ENCODE measurements at regions of chr6 and their contacts with region 1.

Region 1: DNA sequence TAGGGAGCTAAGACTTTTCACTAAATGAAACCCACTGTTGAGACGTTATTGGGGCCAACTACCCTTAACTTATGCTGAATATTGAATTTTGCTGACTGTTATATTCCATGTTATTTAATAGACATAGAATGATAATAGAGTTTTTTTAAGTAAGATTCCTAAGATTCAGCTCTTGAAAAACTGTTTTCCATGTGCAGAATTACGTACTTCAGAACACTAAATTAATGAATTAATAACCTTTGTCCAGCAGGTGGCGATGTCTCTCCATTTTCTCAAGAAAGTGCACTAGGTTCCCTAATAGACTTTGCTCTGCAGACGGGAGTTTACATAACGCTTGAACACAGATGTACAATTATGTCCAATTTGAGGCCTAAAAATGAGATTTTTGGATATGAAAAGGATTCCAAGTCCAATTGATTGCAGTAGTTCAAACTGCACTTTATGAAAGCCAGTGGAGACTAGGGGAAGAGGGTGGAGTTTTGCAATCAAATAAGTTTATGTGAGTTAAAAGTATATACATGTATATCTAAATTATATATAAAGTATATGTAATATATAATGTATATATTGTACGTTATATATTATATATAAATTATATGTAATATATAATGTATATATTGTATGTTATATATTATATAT is 282.1 kb downstream of the UST start:
- DNase-seq: peak; percentile 87
- H3K4me3 Mint-ChIP-seq: no peak overlapping the region
- H3K27ac Mint-ChIP-seq: peak overlapping the region; percentile 57
- H3K4me1 Mint-ChIP-seq: peaks cover 46% of the 10 kb centered on the region
- H3K27me3 Mint-ChIP-seq: no peaks in the 10 kb centered on the region

Region 2: DNA sequence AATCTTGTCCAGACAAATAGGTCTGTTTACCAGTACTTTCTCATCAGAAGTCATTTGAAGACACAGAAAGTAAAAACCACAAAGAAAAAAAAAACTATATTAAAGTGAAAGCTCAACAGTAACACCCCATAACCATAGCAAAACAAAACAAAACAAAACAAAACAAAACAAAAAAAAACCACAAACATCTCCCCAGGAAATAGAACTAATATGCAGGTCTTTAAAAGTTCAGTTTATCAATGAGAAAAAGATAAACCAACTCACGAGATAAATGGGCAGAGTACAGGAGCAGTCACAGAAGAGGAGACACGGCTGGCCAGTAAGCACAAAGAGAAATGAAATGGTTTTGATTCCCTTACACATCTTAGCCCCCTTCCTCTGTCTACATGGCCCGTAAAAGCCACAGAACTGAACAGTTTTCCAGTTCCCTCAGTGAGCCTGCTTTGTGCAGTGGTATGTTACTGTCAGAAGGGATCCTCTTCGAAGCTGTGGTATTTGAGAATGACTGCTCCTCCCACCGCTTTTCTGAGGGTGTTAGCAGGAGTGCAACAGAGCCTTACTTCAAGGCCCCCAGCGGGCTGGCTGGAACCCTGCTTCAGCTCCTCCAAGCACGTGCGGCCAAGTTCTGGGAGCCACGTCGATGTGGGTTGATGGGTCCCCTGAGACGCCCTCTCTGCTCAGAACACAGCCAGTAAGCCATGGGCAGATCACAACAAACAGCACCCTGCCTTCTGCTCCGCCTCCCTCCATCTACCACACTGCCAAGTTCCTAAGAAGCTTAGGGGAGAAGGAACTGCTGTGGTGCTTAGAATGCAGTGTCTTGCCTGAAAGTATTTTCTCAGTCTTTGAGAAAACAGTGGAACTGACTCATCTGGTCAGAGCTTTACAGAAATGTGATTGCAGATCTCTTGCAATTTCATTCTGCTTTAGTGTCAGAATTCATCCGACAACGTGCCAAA is 268.0 kb before region 1 on chr6:
- CTCF ChIA-PET with region 1: no interaction called
- intact Hi-C with region 1: loop called (anchors 2 kb)
- DNase-seq: peak; percentile 41
- H3K4me3 Mint-ChIP-seq: peak overlapping the region; percentile 30
- H3K27ac Mint-ChIP-seq: peak overlapping the region; percentile 65
- H3K4me1 Mint-ChIP-seq: peaks cover 37% of the 10 kb centered on the region
- H3K27me3 Mint-ChIP-seq: peaks cover 37% of the 10 kb centered on the region

Region 3: DNA sequence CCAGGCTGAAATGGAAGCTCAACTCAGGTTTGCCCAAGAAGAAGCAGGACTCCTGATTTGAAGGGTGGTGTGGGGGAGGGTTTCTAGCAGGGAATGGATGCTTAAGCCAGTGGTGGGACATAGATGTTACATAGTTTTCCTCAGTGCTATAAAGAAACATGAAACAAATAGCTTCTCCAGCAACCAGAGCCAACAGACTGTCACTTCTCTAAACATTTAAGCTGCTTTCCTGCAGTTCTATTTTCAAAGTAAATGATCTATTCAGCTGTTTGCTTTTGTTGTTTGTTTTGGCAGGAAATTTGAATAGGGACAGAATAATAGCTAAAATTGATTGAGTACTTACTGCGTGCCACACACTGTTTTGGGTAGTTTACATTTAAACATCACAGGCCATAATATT is 113.1 kb before region 1 on chr6:
- CTCF ChIA-PET with region 1: no interaction called
- intact Hi-C with region 1: no loop called
- DNase-seq: no peak
- H3K4me3 Mint-ChIP-seq: no peak overlapping the region
- H3K27ac Mint-ChIP-seq: no peak overlapping the region
- H3K4me1 Mint-ChIP-seq: no peaks in the 10 kb centered on the region
- H3K27me3 Mint-ChIP-seq: no peaks in the 10 kb centered on the region

Region 4: GRCh38 chr6:149075616-149076364 is 46.9 kb after region 1 on chr6:
- CTCF ChIA-PET with region 1: interaction called, 26 read pairs
- intact Hi-C with region 1: loop called (anchors 1 kb)
- DNase-seq: no peak
- H3K4me3 Mint-ChIP-seq: no peak overlapping the region
- H3K27ac Mint-ChIP-seq: peak overlapping the region; percentile 28
- H3K4me1 Mint-ChIP-seq: peaks cover 28% of the 10 kb centered on the region
- H3K27me3 Mint-ChIP-seq: no peaks in the 10 kb centered on the region

Region 5: GRCh38 chr6:149211046-149211571 is 182.2 kb after region 1 on chr6:
- CTCF ChIA-PET with region 1: interaction called, 3 read pairs
- intact Hi-C with region 1: loop called (anchors 2 kb)
- DNase-seq: peak; percentile 57
- H3K4me3 Mint-ChIP-seq: no peak overlapping the region
- H3K27ac Mint-ChIP-seq: peak overlapping the region; percentile 77
- H3K4me1 Mint-ChIP-seq: peaks cover 19% of the 10 kb centered on the region
- H3K27me3 Mint-ChIP-seq: no peaks in the 10 kb centered on the region

Region 6: GRCh38 chr6:149380523-149380922 is 351.6 kb after region 1 on chr6:
- CTCF ChIA-PET with region 1: no interaction called
- intact Hi-C with region 1: loop called (anchors 1 kb)
- DNase-seq: peak; percentile 35
- H3K4me3 Mint-ChIP-seq: no peak overlapping the region
- H3K27ac Mint-ChIP-seq: no peak overlapping the region
- H3K4me1 Mint-ChIP-seq: peaks cover 63% of the 10 kb centered on the region
- H3K27me3 Mint-ChIP-seq: no peaks in the 10 kb centered on the region

Region 7: DNA sequence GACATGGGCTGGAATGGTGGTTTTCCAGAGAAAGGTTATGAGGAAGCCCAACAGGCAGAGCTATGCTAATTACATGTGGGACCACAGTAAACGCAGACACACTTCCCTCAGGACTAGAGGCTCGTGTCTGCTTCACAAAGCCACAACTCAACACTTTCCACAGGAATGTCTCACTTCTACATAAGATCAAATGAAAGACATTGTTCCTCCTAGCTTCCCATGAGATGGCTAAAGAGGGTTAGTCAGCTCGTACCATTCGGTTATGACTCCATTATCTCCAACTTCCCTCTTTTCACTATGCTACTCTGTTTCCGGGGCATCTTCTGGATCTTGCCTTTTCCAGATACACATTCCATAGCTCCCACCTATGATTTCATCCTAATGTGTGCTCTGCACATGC is 485.0 kb after region 1 on chr6:
- CTCF ChIA-PET with region 1: interaction called, 5 read pairs
- intact Hi-C with region 1: loop called (anchors 1 kb)
- DNase-seq: no peak
- H3K4me3 Mint-ChIP-seq: no peak overlapping the region
- H3K27ac Mint-ChIP-seq: peak overlapping the region; percentile 4
- H3K4me1 Mint-ChIP-seq: peaks cover 50% of the 10 kb centered on the region
- H3K27me3 Mint-ChIP-seq: no peaks in the 10 kb centered on the region

Region 8: GRCh38 chr6:149925974-149926777 is 897.3 kb after region 1 on chr6:
- CTCF ChIA-PET with region 1: no interaction called
- intact Hi-C with region 1: loop called (anchors 2 kb)
- DNase-seq: peak; percentile 93
- H3K4me3 Mint-ChIP-seq: peak overlapping the region; percentile 44
- H3K27ac Mint-ChIP-seq: no peak overlapping the region
- H3K4me1 Mint-ChIP-seq: peaks cover 15% of the 10 kb centered on the region
- H3K27me3 Mint-ChIP-seq: peaks cover 78% of the 10 kb centered on the region